CD4-positive, alpha-beta memory T cell (primary cell): ENCODE measurements at regions of chr7 and their contacts with region 1.

Region 1: DNA sequence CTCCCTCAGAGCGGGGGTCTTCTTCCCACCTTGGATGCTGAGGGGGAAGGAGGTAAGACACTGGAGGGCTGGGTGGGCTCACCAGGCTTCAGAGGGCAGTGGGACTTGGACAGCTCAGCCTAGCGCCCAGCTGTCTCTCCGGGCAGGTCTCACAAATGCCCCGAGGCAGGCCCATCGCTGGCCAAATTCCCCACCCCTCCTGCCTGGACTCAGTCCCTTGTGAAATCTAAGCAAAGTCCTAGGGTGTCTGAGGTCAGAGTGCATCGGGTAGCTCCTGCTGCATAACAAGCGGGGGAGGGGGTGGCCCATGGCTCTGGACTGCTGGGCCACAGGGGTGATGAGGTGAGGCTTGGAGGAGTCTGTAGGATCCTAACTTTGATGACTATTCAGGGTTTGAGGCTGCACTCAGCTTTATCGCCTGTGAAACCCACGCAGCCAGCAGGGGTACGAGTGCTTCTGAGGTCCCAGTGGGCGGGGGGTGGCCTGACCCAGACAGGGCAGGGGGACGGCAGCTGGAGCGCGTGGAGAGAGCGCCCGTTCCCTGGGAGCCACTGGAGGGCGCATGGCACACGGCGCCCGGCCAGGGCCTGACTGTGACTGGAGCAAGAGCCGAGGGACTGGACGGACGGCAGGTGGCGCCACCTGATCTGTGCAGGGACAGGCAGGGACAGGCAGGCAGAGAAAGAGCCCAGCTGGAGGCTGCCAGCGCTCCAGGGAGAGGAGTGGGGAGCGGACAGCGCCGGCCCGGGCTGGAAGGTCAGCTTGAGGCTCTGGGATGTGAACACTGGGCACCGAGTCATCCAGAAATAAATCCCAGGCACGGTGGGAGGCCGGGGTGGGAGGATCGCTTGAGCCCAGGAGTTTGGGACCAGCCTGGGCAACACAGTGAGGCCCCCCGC is 10.0 kb downstream of the CYP2W1 start:
- DNase-seq: peak; percentile 88 to 92 (median 89)
- H3K4me3 ChIP-seq: no peak overlapping the region
- H3K4me3 Mint-ChIP-seq: no peak overlapping the region
- H3K27ac ChIP-seq: no peak overlapping the region
- H3K27ac Mint-ChIP-seq: peak overlapping the region in 2 of 7 donors; percentile 51 to 89
- H3K4me1 ChIP-seq: peaks cover 4% of the 10 kb centered on the region
- H3K4me1 Mint-ChIP-seq: peaks cover 0 to 6% (median 3%) of the 10 kb centered on the region in 4 donors
- H3K27me3 ChIP-seq: no peaks in the 10 kb centered on the region
- H3K27me3 Mint-ChIP-seq: no peaks in the 10 kb centered on the region

Region 2: GRCh38 chr7:909358-910329 is 83.3 kb before region 1 on chr7:
- CTCF ChIA-PET with region 1: interaction called, 22 read pairs
- POLR2A ChIA-PET with region 1: no interaction called
- intact Hi-C with region 1: no loop called
- DNase-seq: peak in 1 of 5 donors; percentile 46
- H3K4me3 ChIP-seq: no peak overlapping the region
- H3K4me3 Mint-ChIP-seq: peak overlapping the region; percentile 35 to 77 (median 72)
- H3K27ac ChIP-seq: no peak overlapping the region
- H3K27ac Mint-ChIP-seq: peak overlapping the region in 3 of 7 donors; percentile 65 to 68 (median 67)
- H3K4me1 ChIP-seq: peaks cover 10% of the 10 kb centered on the region
- H3K4me1 Mint-ChIP-seq: peaks cover 2 to 14% (median 10%) of the 10 kb centered on the region in 4 donors
- H3K27me3 ChIP-seq: no peaks in the 10 kb centered on the region
- H3K27me3 Mint-ChIP-seq: no peaks in the 10 kb centered on the region

Region 3: DNA sequence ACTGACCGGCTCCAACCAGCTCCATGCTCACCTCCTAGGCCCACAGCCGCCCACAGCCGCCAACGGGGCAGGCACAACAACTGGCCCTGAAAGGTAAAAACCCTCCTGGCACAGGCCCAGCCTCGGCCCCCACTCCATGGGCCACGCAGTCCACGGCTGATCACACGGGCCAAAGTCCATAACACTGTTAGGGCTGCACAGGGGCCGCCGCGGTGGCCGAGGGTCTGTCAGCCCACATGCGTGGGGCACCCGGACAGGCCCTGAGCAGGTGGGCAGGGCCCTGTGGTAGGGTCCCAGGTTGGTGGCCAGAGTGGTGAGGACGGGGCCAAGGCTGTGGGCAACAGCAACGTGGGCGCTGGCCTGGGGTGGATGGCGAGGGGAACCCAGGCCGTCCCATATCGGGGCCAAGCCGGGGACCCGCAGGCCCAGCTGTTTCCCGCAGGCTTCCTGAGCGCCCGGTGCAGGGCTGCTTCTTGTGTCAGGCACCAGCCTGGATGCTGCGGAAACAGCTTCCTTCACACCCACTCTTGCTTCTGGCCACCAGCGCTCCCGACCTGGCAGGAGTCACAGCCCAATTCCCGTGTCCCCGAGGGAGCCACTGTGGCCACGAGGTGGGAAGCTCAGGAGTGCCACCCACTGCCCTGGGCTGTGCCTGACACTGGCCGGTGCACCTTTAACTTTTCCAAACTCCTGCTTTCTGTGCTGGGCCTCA is 19.2 kb after region 1 on chr7:
- CTCF ChIA-PET with region 1: interaction called, 11 read pairs
- POLR2A ChIA-PET with region 1: no interaction called
- intact Hi-C with region 1: no loop called
- DNase-seq: no peak
- H3K4me3 ChIP-seq: no peak overlapping the region
- H3K4me3 Mint-ChIP-seq: no peak overlapping the region
- H3K27ac ChIP-seq: no peak overlapping the region
- H3K27ac Mint-ChIP-seq: peak overlapping the region in 1 of 7 donors; percentile 89
- H3K4me1 ChIP-seq: peaks cover 15% of the 10 kb centered on the region
- H3K4me1 Mint-ChIP-seq: peaks cover 12 to 27% (median 18%) of the 10 kb centered on the region in 4 donors
- H3K27me3 ChIP-seq: no peaks in the 10 kb centered on the region
- H3K27me3 Mint-ChIP-seq: no peaks in the 10 kb centered on the region

Region 4: DNA sequence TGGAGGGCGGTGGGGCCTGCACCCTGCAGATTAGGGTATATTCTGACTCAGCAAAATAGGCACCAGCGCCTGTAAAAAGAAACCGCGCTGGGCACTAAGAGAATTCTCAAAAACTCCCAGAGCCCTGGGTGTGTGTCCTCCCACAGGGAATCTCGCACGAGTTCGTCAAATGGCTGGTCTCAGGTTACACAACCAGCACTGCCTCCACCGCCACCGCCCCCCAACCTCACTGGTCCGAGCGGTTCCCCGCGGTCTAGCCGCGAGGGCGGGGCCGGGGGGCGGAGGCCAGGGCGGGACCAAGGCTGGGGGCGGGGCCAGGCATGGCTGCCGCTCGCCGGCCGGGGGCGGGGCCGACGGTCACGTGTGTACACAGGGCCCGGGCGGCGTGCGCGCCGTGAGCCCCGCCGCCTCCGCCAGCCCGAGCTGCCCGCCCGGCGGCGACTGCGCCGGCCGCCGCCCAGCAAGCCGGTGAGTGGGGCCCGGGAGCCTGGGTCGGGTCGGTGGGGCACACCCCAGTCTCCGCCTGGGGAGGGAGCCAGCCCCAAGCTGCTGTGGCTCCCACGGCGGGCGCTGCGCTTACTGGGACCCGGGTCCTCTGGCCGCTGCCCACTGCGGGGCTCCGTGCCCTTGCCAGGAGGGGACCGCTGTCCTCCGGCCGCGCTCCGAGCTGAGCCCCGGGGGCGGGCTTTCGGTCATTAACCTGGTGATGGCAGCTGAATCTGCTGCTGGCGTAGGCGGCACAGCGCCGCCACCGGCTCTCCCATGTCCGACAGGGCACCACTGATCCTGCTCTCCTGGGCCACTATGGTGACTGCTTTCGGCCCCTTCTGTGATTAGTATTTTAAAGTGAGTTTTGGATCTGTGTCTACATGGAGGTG is 51.5 kb after region 1 on chr7 and contains the start of gene GPR146:
- CTCF ChIA-PET with region 1: interaction called, 65 read pairs
- POLR2A ChIA-PET with region 1: interaction called, 4 read pairs
- intact Hi-C with region 1: loop called (anchors 1 kb)
- DNase-seq: peak; percentile 85 to 89 (median 86)
- H3K4me3 ChIP-seq: peak within 1 kb of the TSS; percentile 67 to 69
- H3K4me3 Mint-ChIP-seq: peak within 1 kb of the TSS; percentile 88 to 96 (median 92)
- H3K27ac ChIP-seq: peak within 1 kb of the TSS; percentile 55
- H3K27ac Mint-ChIP-seq: peak within 1 kb of the TSS; percentile 83 to 94 (median 91)
- H3K4me1 ChIP-seq: peaks cover 70% of the 10 kb centered on the region
- H3K4me1 Mint-ChIP-seq: peaks cover 49 to 74% (median 65%) of the 10 kb centered on the region in 4 donors
- H3K27me3 ChIP-seq: no peaks in the 10 kb centered on the region
- H3K27me3 Mint-ChIP-seq: no peaks in the 10 kb centered on the region
- total RNA-seq, gene GPR146: 8.8 to 10.1 TPM

Region 5: GRCh38 chr7:1065263-1066260 is 72.6 kb after region 1 on chr7:
- CTCF ChIA-PET with region 1: interaction called, 359 read pairs
- POLR2A ChIA-PET with region 1: interaction called, 44 read pairs
- intact Hi-C with region 1: no loop called
- DNase-seq: peak; percentile 79 to 84 (median 80)
- H3K4me3 ChIP-seq: peak overlapping the region in 1 of 2 donors; percentile 42
- H3K4me3 Mint-ChIP-seq: peak overlapping the region; percentile 25 to 79 (median 73)
- H3K27ac ChIP-seq: no peak overlapping the region
- H3K27ac Mint-ChIP-seq: peak overlapping the region in 1 of 7 donors; percentile 62
- H3K4me1 ChIP-seq: peaks cover 11% of the 10 kb centered on the region
- H3K4me1 Mint-ChIP-seq: peaks cover 6 to 28% (median 12%) of the 10 kb centered on the region in 4 donors
- H3K27me3 ChIP-seq: no peaks in the 10 kb centered on the region
- H3K27me3 Mint-ChIP-seq: no peaks in the 10 kb centered on the region

Region 6: DNA sequence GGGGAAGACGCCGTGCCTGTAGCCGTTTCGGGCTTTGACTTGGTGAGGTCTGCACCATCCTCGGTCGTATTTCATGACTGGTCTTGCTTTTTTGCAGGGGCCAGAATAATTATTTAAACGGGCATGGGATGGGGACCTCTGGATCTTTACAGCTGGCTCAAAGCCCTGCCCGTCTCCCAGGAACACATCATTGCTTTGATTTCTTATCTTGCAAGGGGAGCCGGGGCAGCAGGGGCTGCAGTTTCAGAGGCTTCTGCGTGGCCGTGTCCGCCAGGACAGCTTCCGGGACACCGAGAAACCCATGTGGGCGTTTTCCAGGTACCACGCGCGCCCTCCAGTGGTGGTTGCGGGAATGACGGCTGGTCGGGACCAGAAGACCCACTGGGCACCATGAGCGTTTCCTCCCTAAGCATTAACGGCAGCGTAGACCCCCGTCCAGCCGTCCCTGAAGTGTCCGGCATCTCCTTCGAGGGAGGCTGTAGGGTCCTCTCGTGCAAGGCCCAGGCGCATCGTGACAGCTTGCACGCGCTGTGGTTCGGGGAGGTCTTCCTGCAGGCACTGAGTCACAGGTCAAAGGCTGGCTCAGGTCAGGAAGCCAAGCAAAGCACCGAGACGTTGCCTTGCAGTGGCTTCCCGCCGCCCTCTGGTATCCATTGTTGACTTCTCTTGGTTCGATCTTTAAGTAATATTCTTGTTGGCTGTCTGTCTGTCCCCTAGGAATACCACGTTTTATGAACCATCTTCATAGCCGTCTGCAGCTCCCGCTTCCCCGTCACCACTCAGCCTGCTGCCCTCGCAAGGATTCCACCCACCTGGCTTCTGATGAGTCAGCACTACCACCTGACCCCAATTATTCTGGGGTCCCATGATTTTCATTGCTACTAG is 183.3 kb after region 1 on chr7:
- CTCF ChIA-PET with region 1: interaction called, 23 read pairs
- POLR2A ChIA-PET with region 1: no interaction called
- intact Hi-C with region 1: loop called (anchors 2 kb)
- DNase-seq: peak; percentile 61 to 73 (median 67)
- H3K4me3 ChIP-seq: peak overlapping the region; percentile 36 to 49
- H3K4me3 Mint-ChIP-seq: peak overlapping the region in 6 of 8 donors; percentile 65 to 83 (median 72)
- H3K27ac ChIP-seq: no peak overlapping the region
- H3K27ac Mint-ChIP-seq: peak overlapping the region in 1 of 7 donors; percentile 40
- H3K4me1 ChIP-seq: peaks cover 11% of the 10 kb centered on the region
- H3K4me1 Mint-ChIP-seq: peaks cover 6 to 14% (median 11%) of the 10 kb centered on the region in 4 donors
- H3K27me3 ChIP-seq: no peaks in the 10 kb centered on the region
- H3K27me3 Mint-ChIP-seq: peaks cover 6 to 7% of the 10 kb centered on the region in 2 donors